Naive thymus-derived CD4-positive, alpha-beta T cell (primary cell): ENCODE measurements at regions of chr21 and their contacts with region 1.

Region 1: DNA sequence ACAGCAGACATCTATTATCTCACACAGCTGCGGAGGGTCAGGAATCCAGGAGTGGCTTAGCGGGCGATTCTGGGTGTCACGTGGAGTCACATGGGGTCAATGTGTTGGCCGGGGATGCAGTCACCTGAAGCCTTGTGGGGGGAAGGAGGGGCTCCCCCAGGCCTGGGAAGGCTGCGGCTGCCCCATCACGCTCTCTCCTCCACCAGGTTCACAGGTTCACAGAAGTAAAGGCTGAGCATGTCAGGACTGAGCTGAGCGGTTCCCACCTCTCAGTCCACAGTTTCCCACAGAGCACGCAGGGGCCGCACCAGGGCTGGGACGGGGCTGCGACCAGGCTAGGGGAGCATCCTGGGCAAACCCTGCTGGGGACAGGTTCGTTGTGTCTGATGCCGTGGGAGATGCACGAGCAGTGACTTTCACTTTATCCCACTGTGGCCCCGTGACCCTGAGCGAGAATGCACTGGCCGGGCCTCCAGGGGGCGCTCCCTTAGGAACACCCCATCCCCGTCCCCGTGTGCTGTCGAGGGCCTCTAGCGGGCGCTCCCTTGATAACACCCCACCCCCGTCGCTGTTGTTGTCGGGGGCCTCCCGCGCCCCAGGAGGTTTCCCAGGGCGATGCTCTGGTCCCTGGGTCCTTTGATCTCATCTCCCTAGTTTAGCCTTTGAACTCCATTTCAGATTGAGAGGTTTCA is 73.2 kb upstream of the TRAPPC10 start:
- DNase-seq: peak; percentile 81 to 92 (median 90)
- ATAC-seq: peak; percentile 100
- H3K4me3 ChIP-seq: peak overlapping the region; percentile 63
- H3K4me3 Mint-ChIP-seq: peak overlapping the region; percentile 79 to 95 (median 88)
- H3K27ac ChIP-seq: peak overlapping the region; percentile 64
- H3K27ac Mint-ChIP-seq: peak overlapping the region; percentile 39 to 96 (median 85)
- H3K4me1 ChIP-seq: peaks cover 0 to 9% of the 10 kb centered on the region in 2 donors
- H3K4me1 Mint-ChIP-seq: peaks cover 17 to 27% (median 21%) of the 10 kb centered on the region in 7 donors
- H3K27me3 ChIP-seq: no peaks in the 10 kb centered on the region
- H3K27me3 Mint-ChIP-seq: no peaks in the 10 kb centered on the region

Region 2: GRCh38 chr21:43916691-43917514 is 22.0 kb before region 1 on chr21:
- CTCF ChIA-PET with region 1: interaction called, 4 read pairs
- POLR2A ChIA-PET with region 1: interaction called, 5 read pairs
- intact Hi-C with region 1: loop called in 1 of 2 experiments (anchors 1 kb)
- DNase-seq: peak; percentile 56 to 83 (median 80)
- ATAC-seq: peak; percentile 93
- H3K4me3 ChIP-seq: peak overlapping the region; percentile 71
- H3K4me3 Mint-ChIP-seq: peak overlapping the region; percentile 83 to 95 (median 89)
- H3K27ac ChIP-seq: peak overlapping the region; percentile 84
- H3K27ac Mint-ChIP-seq: peak overlapping the region; percentile 86 to 96 (median 94)
- H3K4me1 ChIP-seq: peaks cover 25 to 33% of the 10 kb centered on the region in 2 donors
- H3K4me1 Mint-ChIP-seq: peaks cover 47 to 74% (median 61%) of the 10 kb centered on the region in 7 donors
- H3K27me3 ChIP-seq: no peaks in the 10 kb centered on the region
- H3K27me3 Mint-ChIP-seq: peaks cover 0 to 4% (median 0%) of the 10 kb centered on the region in 5 donors

Region 3: GRCh38 chr21:43954042-43954441 is 15.1 kb after region 1 on chr21:
- CTCF ChIA-PET with region 1: no interaction called
- POLR2A ChIA-PET with region 1: no interaction called
- intact Hi-C with region 1: no loop called
- DNase-seq: no peak
- ATAC-seq: no peak
- H3K4me3 ChIP-seq: no peak overlapping the region
- H3K4me3 Mint-ChIP-seq: no peak overlapping the region
- H3K27ac ChIP-seq: no peak overlapping the region
- H3K27ac Mint-ChIP-seq: no peak overlapping the region
- H3K4me1 ChIP-seq: peaks cover 4 to 15% of the 10 kb centered on the region in 2 donors
- H3K4me1 Mint-ChIP-seq: peaks cover 14 to 40% (median 24%) of the 10 kb centered on the region in 7 donors
- H3K27me3 ChIP-seq: no peaks in the 10 kb centered on the region
- H3K27me3 Mint-ChIP-seq: no peaks in the 10 kb centered on the region

Region 4: GRCh38 chr21:43975495-43975993 is 36.6 kb after region 1 on chr21:
- CTCF ChIA-PET with region 1: interaction called, 7 read pairs
- POLR2A ChIA-PET with region 1: no interaction called
- intact Hi-C with region 1: loop called (anchors 1 kb)
- DNase-seq: peak; percentile 70 to 87 (median 81)
- ATAC-seq: peak; percentile 95
- H3K4me3 ChIP-seq: no peak overlapping the region
- H3K4me3 Mint-ChIP-seq: no peak overlapping the region
- H3K27ac ChIP-seq: no peak overlapping the region
- H3K27ac Mint-ChIP-seq: peak overlapping the region in 6 of 9 donors; percentile 0 to 94 (median 58)
- H3K4me1 ChIP-seq: peaks cover 0 to 4% of the 10 kb centered on the region in 2 donors
- H3K4me1 Mint-ChIP-seq: peaks cover 11 to 17% (median 15%) of the 10 kb centered on the region in 7 donors
- H3K27me3 ChIP-seq: no peaks in the 10 kb centered on the region
- H3K27me3 Mint-ChIP-seq: no peaks in the 10 kb centered on the region

Region 5: DNA sequence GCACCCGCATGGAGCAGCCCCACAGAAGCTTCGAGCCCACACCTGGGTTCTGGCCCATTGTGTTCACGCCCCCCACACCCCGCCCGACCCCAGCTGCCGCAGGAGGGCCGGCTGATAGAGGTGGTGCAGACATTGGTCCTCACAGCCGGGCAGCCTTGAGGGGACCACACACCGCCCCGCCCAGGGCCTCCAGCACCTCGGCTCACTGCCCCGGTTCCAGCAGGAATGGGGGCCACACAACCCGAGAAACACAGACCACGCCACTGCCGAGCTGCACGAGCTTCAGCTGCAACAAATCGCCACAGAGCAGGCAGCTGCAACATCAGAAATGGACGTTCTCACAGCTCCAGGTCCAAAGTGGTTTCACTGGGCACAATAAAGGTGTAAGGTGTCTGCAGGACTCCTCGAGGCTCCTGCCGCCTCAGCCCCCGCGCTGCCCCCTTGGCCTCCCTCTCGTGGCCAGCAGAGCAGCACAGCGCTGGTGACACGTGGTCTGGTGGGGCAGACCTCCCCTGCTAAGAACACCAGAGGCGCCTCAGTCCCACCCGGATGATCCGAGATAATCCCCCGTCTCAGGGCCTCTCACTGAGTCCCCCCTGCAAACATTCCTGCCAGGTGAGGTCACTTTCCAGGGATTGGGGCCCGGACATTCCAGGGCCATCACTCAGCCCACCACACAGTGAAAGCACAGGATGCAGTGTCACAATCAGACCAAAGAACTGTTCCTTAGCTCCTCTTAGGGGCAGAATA is 1073.2 kb after region 1 on chr21:
- CTCF ChIA-PET with region 1: no interaction called
- POLR2A ChIA-PET with region 1: no interaction called
- intact Hi-C with region 1: no loop called
- DNase-seq: no peak
- ATAC-seq: no peak
- H3K4me3 ChIP-seq: no peak overlapping the region
- H3K4me3 Mint-ChIP-seq: no peak overlapping the region
- H3K27ac ChIP-seq: no peak overlapping the region
- H3K27ac Mint-ChIP-seq: no peak overlapping the region
- H3K4me1 ChIP-seq: no peaks in the 10 kb centered on the region
- H3K4me1 Mint-ChIP-seq: no peaks in the 10 kb centered on the region
- H3K27me3 ChIP-seq: no peaks in the 10 kb centered on the region
- H3K27me3 Mint-ChIP-seq: peaks cover 13 to 55% (median 23%) of the 10 kb centered on the region in 5 donors